Heart left ventricle (tissue), 16 donors: ENCODE measurements at regions of chr9 and their contacts with region 1.

Region 1: DNA sequence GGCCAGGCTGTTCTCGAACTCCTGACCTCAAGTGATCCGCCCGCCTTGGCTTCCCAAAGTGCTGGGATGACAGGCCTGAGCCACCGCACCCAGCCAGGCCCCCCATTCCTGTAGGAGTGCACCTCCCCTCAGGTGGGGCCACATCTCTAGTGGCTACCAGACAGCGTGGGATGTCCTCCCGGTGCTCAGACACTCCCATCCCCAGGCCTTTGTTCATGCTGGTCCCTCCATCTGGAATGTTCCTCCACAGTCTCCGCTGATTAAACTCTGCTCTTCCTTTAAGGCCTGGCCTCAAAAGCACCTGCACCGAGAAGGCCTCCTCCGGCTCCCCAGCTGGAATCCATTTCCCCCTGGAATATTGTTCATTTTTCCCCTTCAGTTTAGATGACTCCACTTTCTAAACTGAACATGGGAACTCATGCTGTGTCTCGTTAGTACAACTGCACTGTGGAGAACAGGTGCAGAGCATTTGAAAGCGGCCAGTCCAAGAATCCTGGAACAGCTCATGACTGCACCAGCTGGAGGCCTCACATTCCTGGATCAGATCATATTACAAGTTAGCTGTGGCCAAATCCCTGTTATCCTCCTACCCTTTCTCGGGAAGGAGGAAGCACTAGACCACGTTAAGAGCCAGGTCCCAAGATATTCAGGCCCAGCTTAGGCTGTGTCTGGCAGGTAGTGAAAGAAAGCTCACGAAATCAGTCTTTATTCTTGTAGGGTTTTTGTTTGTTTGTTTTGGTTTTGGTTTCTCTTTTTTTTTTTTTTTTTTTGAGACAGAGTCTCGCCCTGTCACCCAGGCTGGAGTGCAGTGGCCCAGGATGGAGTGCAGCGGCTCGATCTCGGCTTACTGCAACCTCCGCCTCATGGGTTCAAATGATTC is 10.8 kb upstream of the PRRC2B start:
- DNase-seq: peak; percentile 54 to 79 (median 69)
- ATAC-seq: peak; percentile 94 to 98 (median 95)
- H3K4me3 ChIP-seq: peak overlapping the region in 2 of 12 donors; percentile 5 to 34
- H3K27ac ChIP-seq: peak overlapping the region; percentile 32 to 82 (median 68)
- H3K4me1 ChIP-seq: peaks cover 0 to 20% (median 11%) of the 10 kb centered on the region in 12 donors
- H3K27me3 ChIP-seq: no peaks in the 10 kb centered on the region
- CTCF ChIP-seq: no peak
- POLR2A ChIP-seq: no peak

Region 2: DNA sequence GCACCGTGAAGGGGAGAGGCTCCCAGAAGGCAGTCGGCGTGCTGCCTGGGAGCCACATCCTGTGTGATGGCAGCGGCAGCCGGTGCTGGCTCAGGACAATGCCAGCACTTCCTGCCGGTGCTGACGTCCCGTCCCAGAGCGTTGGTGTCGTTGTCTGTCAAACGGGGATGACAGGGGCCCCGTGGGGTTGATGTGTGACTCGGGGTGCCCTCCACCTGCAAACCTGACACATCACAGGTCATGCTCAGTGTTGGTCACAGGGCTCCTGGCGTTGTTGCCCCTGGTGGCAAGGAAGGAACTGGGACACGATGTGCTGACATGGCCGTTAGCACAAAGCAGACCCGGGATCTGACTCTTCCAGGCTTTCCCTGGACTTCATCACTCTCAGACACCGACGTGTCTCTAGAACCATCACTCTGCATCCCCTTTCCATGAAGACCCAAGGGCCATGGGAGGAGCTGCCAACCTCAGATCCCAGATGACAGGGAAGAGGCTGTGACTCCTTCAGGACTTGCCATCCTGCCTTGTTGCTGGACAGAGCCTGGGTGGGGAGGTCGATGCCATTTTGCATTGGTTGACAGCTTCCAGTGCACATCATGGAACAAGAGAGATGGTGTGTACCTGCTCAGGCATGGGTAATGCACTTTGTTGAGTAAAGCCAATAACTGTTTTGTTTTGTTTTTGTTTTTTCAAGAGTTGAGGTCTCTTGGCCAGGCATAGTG is 72.1 kb before region 1 on chr9:
- intact Hi-C with region 1: no loop called
- DNase-seq: peak in 1 of 5 donors; percentile 68
- ATAC-seq: peak; percentile 60 to 67 (median 64)
- H3K4me3 ChIP-seq: peak overlapping the region in 2 of 12 donors; percentile 8 to 21
- H3K27ac ChIP-seq: peak overlapping the region in 11 of 12 donors; percentile 3 to 86 (median 33)
- H3K4me1 ChIP-seq: peaks cover 0 to 31% (median 12%) of the 10 kb centered on the region in 12 donors
- H3K27me3 ChIP-seq: no peaks in the 10 kb centered on the region
- CTCF ChIP-seq: peak in 1 of 12 donors; percentile 13
- POLR2A ChIP-seq: no peak

Region 3: DNA sequence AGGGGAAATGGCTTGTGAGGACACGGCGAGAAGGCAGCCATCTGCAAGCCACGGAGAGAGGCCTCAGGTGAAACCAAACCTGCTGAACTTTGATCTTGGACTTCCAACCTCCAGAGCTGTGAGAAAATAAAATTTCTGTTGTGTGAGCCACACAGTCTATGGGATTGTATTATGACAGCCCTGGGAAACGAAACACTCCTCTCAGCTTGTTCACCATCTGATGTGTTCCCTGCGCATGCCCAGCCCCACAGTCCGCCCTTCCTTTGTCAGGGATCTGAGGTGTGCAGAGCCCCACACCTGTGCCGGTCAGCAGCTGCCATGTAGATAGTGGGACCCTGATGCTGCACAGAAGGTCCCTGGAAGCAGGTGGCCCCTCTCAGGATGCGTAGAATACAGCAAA is 59.5 kb before region 1 on chr9:
- intact Hi-C with region 1: no loop called
- DNase-seq: peak in 3 of 5 donors; percentile 4 to 17 (median 16)
- ATAC-seq: no peak
- H3K4me3 ChIP-seq: no peak overlapping the region
- H3K27ac ChIP-seq: no peak overlapping the region
- H3K4me1 ChIP-seq: peaks cover 0 to 22% (median 9%) of the 10 kb centered on the region in 12 donors
- H3K27me3 ChIP-seq: no peaks in the 10 kb centered on the region
- CTCF ChIP-seq: no peak
- POLR2A ChIP-seq: no peak

Region 4: DNA sequence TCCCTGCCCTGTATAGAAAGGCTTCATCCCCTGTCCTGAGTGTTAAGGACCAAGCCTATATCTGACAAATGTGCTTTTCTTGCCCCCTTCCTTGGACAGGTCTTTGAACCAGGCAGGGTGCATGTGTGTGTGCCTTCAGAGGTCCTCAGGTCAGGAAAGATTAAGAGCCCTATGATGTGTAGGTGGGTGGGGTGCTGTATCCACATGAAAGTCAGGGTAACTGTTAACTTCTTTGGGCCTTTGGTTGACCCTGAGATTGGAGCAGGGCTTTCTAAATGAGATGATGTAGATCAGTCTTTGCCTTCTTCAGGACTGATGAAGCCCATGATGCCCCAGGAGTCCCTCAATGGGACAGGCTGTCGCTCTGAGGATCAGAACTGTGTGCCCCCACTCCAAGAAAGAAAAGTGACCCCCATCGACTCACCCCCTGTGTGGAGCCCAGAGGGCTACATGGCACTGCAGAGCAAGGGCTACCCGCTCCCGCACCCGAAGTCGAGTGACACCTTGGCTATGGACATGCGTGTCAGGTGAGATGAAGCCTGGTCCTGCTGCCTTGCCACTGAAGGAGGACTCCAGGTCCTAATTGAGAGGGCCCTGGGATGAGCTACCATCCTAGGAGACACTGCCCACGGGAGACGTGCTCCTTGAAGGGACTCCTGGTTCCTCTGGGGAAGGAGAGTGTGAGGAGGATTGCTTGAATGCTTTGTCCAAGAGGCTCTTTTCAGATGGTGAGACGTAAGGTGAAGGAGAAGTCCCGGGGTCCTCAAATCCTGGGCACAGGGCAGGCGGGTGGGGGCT is 90.3 kb after region 1 on chr9:
- intact Hi-C with region 1: loop called in 2 of 10 experiments (anchors 5 to 10 kb)
- DNase-seq: no peak
- ATAC-seq: no peak
- H3K4me3 ChIP-seq: no peak overlapping the region
- H3K27ac ChIP-seq: no peak overlapping the region
- H3K4me1 ChIP-seq: peaks cover 0 to 28% (median 12%) of the 10 kb centered on the region in 12 donors
- H3K27me3 ChIP-seq: no peaks in the 10 kb centered on the region
- CTCF ChIP-seq: no peak
- POLR2A ChIP-seq: no peak